HCT116 (cell line): ENCODE measurements at regions of chr7 and their contacts with region 1.

Region 1: GRCh38 chr7:135509903-135510602 is at the start of gene CNOT4:
- DNase-seq: peak; percentile 92
- ATAC-seq: peak; percentile 94
- H3K4me3 ChIP-seq: peak within 1 kb of the TSS; percentile 81 to 83
- H3K27ac ChIP-seq: peak within 1 kb of the TSS; percentile 68
- H3K4me1 ChIP-seq: peaks cover 16 to 37% of the 10 kb centered on the region in 2 experiments
- H3K27me3 ChIP-seq: no peaks in the 10 kb centered on the region
- CTCF ChIP-seq: no peak
- POLR2A ChIP-seq: peak; percentile 66
- RAD21 ChIP-seq: no peak
- total RNA-seq, gene CNOT4: 16.6 TPM

Region 2: DNA sequence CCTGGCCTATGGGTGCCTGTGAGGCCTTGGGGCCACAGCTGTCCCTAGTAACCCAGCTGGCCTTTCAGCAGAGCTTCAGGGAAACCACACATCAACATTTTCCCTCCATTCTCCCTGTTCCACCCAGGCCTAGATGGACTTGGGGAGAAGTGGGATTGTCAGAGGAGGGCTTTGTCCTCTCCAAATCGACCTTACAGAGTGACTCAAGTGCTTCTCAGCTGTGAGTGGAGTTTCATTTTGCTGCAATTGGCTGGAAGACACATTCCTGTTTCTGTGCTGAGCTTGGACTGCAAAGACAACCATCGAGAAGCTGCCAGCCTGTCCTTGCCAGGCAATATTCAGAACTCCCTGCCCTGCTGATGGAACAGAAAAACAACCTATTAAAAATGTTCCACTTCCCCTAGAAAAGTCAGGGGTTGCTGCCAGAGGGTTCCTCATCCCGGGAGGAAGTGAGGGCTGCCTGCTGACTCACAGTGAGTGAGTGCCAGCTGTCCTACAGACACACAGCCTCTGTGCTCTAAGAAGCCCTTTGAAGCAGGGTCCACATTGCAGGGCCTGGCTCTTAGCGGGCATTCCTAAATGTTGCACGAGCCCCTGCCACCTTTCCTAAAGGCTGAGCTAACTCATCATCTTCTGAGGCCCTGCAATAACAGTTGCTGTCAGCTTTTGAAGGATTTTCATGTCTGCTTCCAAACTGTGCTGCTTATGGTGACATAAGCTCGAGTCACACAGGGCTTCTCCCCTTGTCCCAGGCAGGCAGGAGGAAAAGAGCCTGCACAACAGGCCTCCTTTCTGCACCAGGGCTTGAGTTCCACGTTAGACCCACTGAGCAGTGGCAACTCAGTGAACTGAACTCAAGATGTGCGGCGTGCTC is 255.9 kb before region 1 on chr7:
- CTCF ChIA-PET with region 1: no interaction called
- POLR2A ChIA-PET with region 1: no interaction called
- RAD21 ChIA-PET with region 1: no interaction called
- intact Hi-C with region 1: no loop called
- DNase-seq: peak; percentile 29
- ATAC-seq: peak; percentile 86
- H3K4me3 ChIP-seq: peak overlapping the region in 1 of 2 experiments; percentile 31; a peak in 1 of 4 replicates
- H3K27ac ChIP-seq: peak overlapping the region; percentile 4; the same call in 1 of the 2 replicates
- H3K4me1 ChIP-seq: peaks cover 9 to 18% of the 10 kb centered on the region in 2 experiments
- H3K27me3 ChIP-seq: no peaks in the 10 kb centered on the region
- CTCF ChIP-seq: no peak
- POLR2A ChIP-seq: no peak
- RAD21 ChIP-seq: no peak

Region 3: DNA sequence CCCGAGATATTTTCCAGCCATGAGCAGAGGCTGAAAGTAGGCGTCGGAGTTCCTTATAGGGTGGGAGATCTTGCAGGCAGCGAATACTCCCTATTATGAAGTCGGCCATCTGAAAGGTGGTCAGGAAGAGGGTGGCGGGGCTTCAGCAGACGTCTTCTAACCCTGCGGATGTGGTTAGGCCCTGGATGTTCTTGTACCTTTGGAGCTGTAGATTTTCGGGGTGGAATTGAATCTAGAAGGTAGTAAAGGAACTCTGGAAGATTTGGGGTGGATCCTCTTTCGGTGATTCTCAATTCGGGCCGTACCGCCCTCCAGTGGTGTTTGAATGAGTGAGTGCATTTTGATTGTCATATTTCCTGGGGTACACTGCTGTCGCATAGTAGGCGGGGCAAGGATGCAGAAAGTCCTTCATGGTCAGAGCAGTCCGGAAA is 48.3 kb after region 1 on chr7:
- CTCF ChIA-PET with region 1: no interaction called
- POLR2A ChIA-PET with region 1: no interaction called
- RAD21 ChIA-PET with region 1: no interaction called
- intact Hi-C with region 1: loop called (anchors 1 kb)
- DNase-seq: peak; percentile 45
- ATAC-seq: peak; percentile 79
- H3K4me3 ChIP-seq: peak overlapping the region; percentile 87 to 89
- H3K27ac ChIP-seq: peak overlapping the region; percentile 89
- H3K4me1 ChIP-seq: peaks cover 4 to 13% of the 10 kb centered on the region in 2 experiments; a peak in 3 of 4 replicates
- H3K27me3 ChIP-seq: no peaks in the 10 kb centered on the region
- CTCF ChIP-seq: peak; percentile 57 to 69 (median 64); a peak in 5 of 6 replicates
- POLR2A ChIP-seq: no peak
- RAD21 ChIP-seq: peak; percentile 62

Region 4: GRCh38 chr7:135645296-135645904 is 135.3 kb after region 1 on chr7:
- CTCF ChIA-PET with region 1: interaction called, 4 read pairs
- POLR2A ChIA-PET with region 1: no interaction called
- RAD21 ChIA-PET with region 1: interaction called in 1 of 2 experiments, 3 read pairs
- intact Hi-C with region 1: loop called (anchors 1 kb)
- DNase-seq: peak; percentile 40
- ATAC-seq: peak; percentile 87
- H3K4me3 ChIP-seq: no peak overlapping the region
- H3K27ac ChIP-seq: no peak overlapping the region
- H3K4me1 ChIP-seq: no peaks in the 10 kb centered on the region
- H3K27me3 ChIP-seq: no peaks in the 10 kb centered on the region
- CTCF ChIP-seq: peak; percentile 52 to 76 (median 68); a peak in 5 of 6 replicates
- POLR2A ChIP-seq: no peak
- RAD21 ChIP-seq: peak; percentile 65